ENCODE measurements at regions of chr6 and their contacts with region 1.

Region 1: DNA sequence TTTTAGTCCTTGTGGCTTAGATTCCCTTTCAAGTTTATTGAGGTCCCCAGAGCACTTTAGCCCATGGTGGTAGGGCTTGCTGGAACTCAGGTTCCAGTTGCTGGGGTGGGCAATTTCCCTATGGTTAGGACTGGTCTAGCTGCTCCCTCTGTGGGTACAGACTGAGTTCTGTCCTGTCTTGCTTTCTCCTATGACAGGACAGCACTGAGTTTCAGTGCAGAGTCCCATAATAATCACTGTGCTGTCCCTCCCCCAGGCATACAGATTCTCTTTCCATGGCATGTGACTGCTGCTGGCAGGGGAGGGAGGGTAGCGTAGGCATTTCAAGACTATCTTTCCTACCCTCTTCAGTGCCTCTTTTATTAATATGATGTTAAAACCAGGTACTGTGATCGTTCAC is 17.1 kb upstream of the ERVFRD-1 start:
- DNase-seq: no peak
- ATAC-seq: peak in 1 of 2 experiments; percentile 35; a peak in 2 of 6 replicates
- H3K4me3 ChIP-seq: no peak overlapping the region
- H3K27ac ChIP-seq: no peak overlapping the region
- H3K4me1 ChIP-seq: peaks cover 23% of the 10 kb centered on the region; the same call in 2 of the 3 replicates
- CTCF ChIP-seq: no peak
- EP300 ChIP-seq: no peak
- POLR2A ChIP-seq: no peak
- RAD21 ChIP-seq: no peak

Region 2: GRCh38 chr6:11144393-11144851 is 15.8 kb after region 1 on chr6:
- CTCF ChIA-PET with region 1: interaction called, 12 read pairs
- POLR2A ChIA-PET with region 1: no interaction called
- DNase-seq: peak; percentile 73 to 88
- ATAC-seq: peak; percentile 89 to 93
- H3K4me3 ChIP-seq: no peak overlapping the region
- H3K27ac ChIP-seq: peak overlapping the region; percentile 89 to 94
- H3K4me1 ChIP-seq: peaks cover 29% of the 10 kb centered on the region
- CTCF ChIP-seq: peak; percentile 83
- EP300 ChIP-seq: no peak
- POLR2A ChIP-seq: no peak
- RAD21 ChIP-seq: peak; percentile 93 to 94

Measured in A549 (cell line).